Psoas muscle (tissue), 8 donors: ENCODE measurements at regions of chr18 and their contacts with region 1.

Region 1: DNA sequence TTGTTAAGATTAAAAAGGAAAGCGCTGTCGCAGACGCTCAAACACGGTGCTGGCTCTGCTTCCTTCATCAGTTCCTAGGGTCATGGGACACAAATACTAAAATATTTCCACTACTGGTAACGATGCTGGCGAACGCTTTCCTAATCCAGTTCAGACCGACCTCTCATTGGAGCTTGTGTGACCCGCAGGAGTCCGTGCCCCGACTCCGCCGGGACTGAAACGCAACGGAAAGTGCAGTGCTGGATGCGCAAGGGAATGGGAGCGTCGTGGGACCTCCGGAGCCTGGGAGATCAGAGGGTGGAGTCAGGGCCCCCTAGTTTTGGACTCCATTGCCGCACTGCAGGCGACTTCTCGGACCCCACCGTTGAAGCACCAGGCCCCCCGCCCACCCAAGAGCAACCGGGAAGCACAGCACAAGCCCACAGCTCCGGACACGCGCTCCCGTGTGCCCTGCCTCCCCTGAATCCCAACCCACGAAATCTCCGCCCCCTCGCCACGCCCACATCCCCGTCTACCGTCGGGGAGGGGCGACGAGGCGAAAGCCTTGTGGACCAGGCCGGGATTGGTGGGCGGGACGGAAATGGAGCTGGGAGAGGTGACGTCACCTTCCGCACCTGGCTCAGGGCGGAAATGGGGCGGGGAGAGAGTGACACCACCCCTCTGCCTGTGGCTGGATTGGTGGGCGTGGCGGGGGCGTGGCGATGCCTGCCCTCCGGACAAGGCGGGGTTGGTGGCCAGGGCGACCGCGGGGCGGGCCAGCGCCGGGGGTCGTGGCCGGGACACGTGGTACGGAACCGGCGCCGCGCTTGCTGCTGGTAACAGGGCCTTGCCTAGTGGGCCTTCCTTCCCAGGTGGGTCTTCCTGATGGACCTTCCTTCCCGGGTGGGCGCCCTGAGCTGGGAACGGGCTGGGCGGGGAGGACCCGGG is at the start of gene CNDP2:
- DNase-seq: peak; percentile 100
- ATAC-seq: peak; percentile 97 to 99 (median 98)
- H3K4me3 ChIP-seq: peak within 1 kb of the TSS; percentile 89
- H3K27ac ChIP-seq: peak within 1 kb of the TSS; percentile 91
- H3K4me1 ChIP-seq: peaks cover 9% of the 10 kb centered on the region
- H3K27me3 ChIP-seq: peaks cover 0 to 2% (median 0%) of the 10 kb centered on the region in 3 donors
- CTCF ChIP-seq: no peak
- total RNA-seq, gene CNDP2: 36.8 to 51.9 (median 44.1) TPM

Region 2: DNA sequence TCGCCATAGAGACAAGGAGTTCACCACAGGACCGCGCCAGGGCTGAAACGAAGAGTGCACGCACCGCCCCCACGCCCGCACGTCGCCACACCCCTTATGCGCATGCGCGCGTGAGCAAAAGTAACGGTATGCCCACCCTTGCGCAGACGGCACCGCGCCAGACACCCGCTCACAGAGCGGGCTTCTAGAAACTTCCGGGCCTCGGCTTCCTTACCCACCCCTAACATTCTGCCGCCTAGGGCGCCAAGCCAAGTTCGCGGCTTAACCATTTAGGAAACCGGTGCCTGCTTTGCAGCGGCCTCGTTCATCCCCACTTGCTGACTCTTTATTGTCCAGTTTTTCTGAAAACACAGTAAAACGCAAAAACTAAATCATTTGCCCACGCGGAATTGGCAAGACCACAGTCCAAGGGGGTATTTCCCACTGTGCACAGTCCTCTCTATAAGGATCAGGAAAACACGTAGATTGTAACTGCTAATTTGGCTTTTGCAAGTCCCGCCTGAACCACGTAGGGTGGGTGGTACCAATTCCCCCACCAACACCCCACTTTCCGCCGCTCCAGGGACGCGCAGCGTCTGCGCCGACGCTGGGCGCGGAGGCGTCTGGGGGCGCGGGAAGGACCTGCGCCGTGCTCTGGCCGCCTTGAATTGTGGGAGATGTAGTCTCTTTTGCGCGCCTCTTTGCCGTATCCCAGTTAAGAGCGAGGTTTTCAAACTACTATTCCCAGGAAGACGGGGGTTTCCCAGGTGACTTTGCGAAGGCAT is 347.9 kb before region 1 on chr18 and contains the starts of genes FBXO15 and TIMM21:
- intact Hi-C with region 1: loop called (anchors 5 to 10 kb)
- DNase-seq: peak; percentile 98 to 99
- ATAC-seq: peak; percentile 96 to 97 (median 97)
- H3K4me3 ChIP-seq: peak within 1 kb of the TSS; percentile 83
- H3K27ac ChIP-seq: peak within 1 kb of the TSS; percentile 93
- H3K4me1 ChIP-seq: peaks cover 32% of the 10 kb centered on the region
- H3K27me3 ChIP-seq: no peaks in the 10 kb centered on the region
- CTCF ChIP-seq: no peak
- total RNA-seq, gene FBXO15: 0.30 TPM in 2 of 4 donors, not detected in the others
- total RNA-seq, gene TIMM21: 52.6 to 91.6 (median 66.4) TPM

Region 3: GRCh38 chr18:74196220-74197119 is 299.4 kb before region 1 on chr18:
- intact Hi-C with region 1: loop called in 1 of 2 experiments (anchors 5 kb)
- DNase-seq: no peak
- ATAC-seq: peak; percentile 47 to 80 (median 58)
- H3K4me3 ChIP-seq: no peak overlapping the region
- H3K27ac ChIP-seq: no peak overlapping the region
- H3K4me1 ChIP-seq: no peaks in the 10 kb centered on the region
- H3K27me3 ChIP-seq: peaks cover 0 to 4% (median 0%) of the 10 kb centered on the region in 3 donors
- CTCF ChIP-seq: peak; percentile 94

Region 4: DNA sequence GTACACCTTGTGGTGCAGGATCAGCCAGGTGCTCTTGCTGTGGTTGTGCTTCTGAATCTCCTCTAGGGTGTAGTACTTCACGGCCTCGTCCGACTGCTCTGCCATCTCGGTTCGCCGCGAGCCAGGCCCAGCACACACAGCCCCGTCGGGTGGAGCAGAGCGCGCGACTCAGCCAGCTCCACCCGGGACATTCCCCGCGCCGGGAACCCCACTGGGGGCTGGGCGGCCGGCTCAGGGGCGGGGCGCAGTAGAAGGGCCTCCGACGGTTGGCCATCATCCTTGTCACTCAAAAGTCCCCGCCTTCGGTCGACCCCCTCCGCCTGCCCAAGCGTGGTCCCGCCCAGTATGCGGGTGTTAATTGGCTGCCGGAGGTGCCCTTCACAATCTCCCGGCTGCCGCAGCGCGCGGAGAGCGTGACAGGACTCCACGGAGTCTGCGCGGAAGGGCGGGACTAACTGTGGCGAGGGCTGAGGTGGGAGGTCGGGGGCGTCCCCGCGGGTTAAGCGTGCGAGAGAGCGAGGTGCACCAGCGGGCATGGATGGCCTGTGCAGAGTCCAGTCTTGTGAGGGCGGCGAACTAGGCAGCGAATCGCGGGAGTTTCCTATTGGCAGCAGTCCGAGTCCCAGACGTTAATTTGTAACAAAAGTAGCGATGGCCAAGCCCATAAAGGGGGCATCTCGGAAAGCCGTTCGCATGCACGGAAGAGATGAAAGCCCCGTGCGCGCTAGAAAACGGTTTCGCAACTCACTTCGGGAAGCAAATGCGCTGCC is 203.9 kb before region 1 on chr18 and contains the start of gene CYB5A:
- intact Hi-C with region 1: loop called (anchors 5 to 10 kb)
- DNase-seq: peak; percentile 98 to 99
- ATAC-seq: peak; percentile 99 to 100 (median 99)
- H3K4me3 ChIP-seq: peak within 1 kb of the TSS; percentile 95
- H3K27ac ChIP-seq: peak within 1 kb of the TSS; percentile 53
- H3K4me1 ChIP-seq: no peaks in the 10 kb centered on the region
- H3K27me3 ChIP-seq: no peaks in the 10 kb centered on the region
- CTCF ChIP-seq: no peak
- total RNA-seq, gene CYB5A: 13.4 to 27.1 (median 22.1) TPM

Region 5: DNA sequence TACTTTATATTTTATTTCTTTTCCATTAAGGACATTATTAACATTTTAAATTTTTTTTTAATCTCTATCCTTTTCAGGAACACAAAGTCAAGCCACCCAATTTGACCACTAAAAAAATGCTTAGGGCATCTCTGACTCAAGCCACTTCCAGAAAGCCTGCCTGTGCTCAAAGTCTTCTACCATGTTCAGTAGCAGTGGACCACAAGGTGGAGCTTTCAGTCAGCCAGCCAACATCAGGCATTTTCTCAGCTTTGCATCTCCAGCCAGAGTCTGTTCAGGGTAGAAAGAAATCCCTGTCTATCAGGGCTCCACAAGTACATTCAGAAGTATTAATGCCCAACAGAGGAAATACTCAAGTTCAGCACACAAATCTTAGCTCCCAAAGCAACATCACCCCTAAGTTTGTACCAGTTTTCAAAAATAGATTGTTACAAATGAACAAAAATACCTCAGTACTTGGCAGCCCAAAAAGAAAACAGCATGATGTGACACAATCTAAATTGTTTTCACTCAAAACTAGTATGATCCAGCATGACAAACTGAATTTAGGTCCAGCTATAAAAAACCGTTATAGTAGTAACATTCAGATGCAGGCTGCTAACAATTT is 142.6 kb before region 1 on chr18:
- intact Hi-C with region 1: loop called in 1 of 2 experiments (anchors 5 kb)
- DNase-seq: no peak
- ATAC-seq: peak; percentile 51 to 74 (median 52)
- H3K4me3 ChIP-seq: no peak overlapping the region
- H3K27ac ChIP-seq: no peak overlapping the region
- H3K4me1 ChIP-seq: no peaks in the 10 kb centered on the region
- H3K27me3 ChIP-seq: no peaks in the 10 kb centered on the region
- CTCF ChIP-seq: peak; percentile 63

Region 6: DNA sequence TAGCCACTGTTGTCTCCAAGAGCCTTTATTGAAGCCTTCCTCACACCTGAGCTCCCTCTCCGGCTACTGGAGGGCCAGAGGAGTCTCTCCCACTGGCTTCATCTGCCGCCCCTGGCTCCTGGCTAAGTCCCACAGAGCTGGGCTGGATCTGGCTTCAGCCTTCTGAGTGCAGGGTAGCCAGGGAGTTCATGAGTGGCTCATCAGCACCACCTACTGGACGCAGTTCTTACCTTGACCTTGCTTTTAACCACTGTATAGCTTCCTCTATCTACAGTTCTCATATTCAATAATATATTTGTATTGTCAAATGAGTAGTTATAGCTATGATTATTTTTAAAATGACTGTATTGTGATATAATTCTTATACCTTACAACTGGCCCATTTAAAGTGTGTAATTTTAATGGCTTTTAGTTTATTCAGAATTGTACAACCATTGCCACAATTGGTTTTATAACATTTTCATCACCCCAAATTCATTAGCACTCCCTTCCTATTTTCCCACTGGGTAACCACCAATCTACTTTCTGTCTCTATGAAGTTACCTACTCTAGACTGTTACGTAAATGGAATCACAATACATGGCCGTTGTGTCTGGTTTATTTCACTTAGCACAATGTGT is 56.2 kb after region 1 on chr18:
- intact Hi-C with region 1: loop called in 1 of 2 experiments (anchors 1 kb)
- DNase-seq: peak; percentile 74 to 84
- ATAC-seq: peak; percentile 84 to 94 (median 90)
- H3K4me3 ChIP-seq: no peak overlapping the region
- H3K27ac ChIP-seq: no peak overlapping the region
- H3K4me1 ChIP-seq: no peaks in the 10 kb centered on the region
- H3K27me3 ChIP-seq: peaks cover 0 to 21% (median 2%) of the 10 kb centered on the region in 3 donors
- CTCF ChIP-seq: peak; percentile 88

Region 7: GRCh38 chr18:74597662-74598349 is 102.0 kb after region 1 on chr18 and contains the start of gene ZNF407:
- intact Hi-C with region 1: loop called (anchors 10 kb)
- DNase-seq: peak; percentile 87 to 93
- ATAC-seq: peak; percentile 92 to 94 (median 92)
- H3K4me3 ChIP-seq: peak within 1 kb of the TSS; percentile 98
- H3K27ac ChIP-seq: peak within 1 kb of the TSS; percentile 97
- H3K4me1 ChIP-seq: peaks cover 38% of the 10 kb centered on the region
- H3K27me3 ChIP-seq: no peaks in the 10 kb centered on the region
- CTCF ChIP-seq: no peak
- total RNA-seq, gene ZNF407: 7.9 to 10.2 (median 8.8) TPM